ENCODE measurements at regions of chr4 and their contacts with region 1.

Region 1: DNA sequence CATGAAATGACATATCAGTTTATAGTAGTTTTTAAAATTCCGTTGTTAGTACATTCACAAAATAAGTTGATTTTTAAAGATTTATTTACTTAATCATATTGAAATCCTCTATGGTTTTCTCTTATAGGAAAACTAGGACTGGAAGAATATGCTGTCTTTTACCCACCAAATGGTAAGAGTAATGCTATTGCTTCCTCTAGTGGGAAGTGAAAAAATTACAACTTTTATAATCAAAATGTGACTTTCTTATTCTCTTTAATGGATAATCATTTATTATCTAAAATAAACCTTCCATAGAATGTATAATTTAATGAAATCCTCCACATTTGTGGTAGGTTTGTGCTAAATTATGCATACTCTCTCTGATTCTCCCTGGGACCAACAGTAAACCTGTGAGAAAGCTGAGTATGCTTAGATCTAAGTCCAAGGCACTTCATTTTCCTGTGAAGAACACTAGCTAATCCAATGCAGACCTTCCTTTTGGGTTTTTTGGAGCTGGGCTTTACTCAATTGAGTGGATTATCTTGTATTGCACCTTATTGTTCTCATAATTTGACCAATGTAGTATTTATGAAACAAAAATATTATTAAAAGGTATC is 136.2 kb downstream of the TBC1D19 start:
- DNase-seq: no peak
- ATAC-seq: no peak
- H3K4me3 ChIP-seq: no peak overlapping the region
- H3K4me3 Mint-ChIP-seq: no peak overlapping the region
- H3K27ac ChIP-seq: no peak overlapping the region
- H3K27ac Mint-ChIP-seq: no peak overlapping the region
- H3K4me1 ChIP-seq: peaks cover 0 to 6% of the 10 kb centered on the region in 2 donors
- H3K4me1 Mint-ChIP-seq: peaks cover 7% of the 10 kb centered on the region
- H3K27me3 ChIP-seq: no peaks in the 10 kb centered on the region
- H3K27me3 Mint-ChIP-seq: no peaks in the 10 kb centered on the region
- CTCF ChIP-seq: peak; percentile 59

Region 2: GRCh38 chr4:26459054-26459755 is 260.8 kb before region 1 on chr4:
- CTCF ChIA-PET with region 1: interaction called, 4 read pairs
- POLR2A ChIA-PET with region 1: no interaction called
- intact Hi-C with region 1: loop called (anchors 1 kb)
- DNase-seq: peak; percentile 61
- ATAC-seq: no peak
- H3K4me3 ChIP-seq: peak overlapping the region in 1 of 5 experiments; percentile 17
- H3K4me3 Mint-ChIP-seq: peak overlapping the region; percentile 53
- H3K27ac ChIP-seq: no peak overlapping the region
- H3K27ac Mint-ChIP-seq: no peak overlapping the region
- H3K4me1 ChIP-seq: peaks cover 3 to 4% of the 10 kb centered on the region in 2 donors
- H3K4me1 Mint-ChIP-seq: peaks cover 4% of the 10 kb centered on the region
- H3K27me3 ChIP-seq: no peaks in the 10 kb centered on the region
- H3K27me3 Mint-ChIP-seq: peaks cover 5% of the 10 kb centered on the region
- CTCF ChIP-seq: peak; percentile 68

Region 3: DNA sequence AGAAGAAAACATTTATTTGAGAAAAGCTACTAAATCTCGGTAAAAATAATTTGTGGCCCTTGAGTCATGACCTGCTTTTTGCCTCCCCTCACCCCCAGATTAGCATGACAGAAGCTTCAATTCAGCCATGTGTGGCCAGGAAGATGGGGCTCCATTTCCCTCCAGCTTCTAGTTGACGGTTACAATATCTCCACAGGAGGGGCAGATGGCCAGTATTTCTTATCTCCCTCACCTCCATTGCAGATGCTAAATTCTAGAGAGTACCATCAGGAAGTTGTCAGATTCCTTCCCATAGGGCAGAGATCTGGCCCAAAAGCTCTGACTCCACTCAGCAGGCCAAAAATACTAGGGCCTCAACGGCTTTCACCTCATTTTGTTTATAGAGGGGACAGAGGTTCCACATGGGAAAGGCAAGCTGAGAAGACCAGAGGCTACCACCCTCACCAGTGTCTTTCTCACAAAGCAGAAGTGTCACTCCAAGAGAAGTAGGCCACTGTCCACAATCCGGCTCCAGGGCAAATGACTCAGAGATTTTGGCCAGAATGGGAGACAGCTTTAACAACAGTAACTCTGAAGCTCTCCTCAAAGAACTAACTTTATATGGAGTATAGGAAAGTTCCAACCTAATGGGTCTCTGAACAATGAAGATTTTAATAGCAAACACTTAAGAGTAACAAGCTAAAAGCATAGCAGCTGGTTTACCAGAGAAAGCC is 27.9 kb before region 1 on chr4:
- CTCF ChIA-PET with region 1: no interaction called
- POLR2A ChIA-PET with region 1: no interaction called
- intact Hi-C with region 1: no loop called
- DNase-seq: no peak
- ATAC-seq: no peak
- H3K4me3 ChIP-seq: no peak overlapping the region
- H3K4me3 Mint-ChIP-seq: no peak overlapping the region
- H3K27ac ChIP-seq: no peak overlapping the region
- H3K27ac Mint-ChIP-seq: no peak overlapping the region
- H3K4me1 ChIP-seq: no peaks in the 10 kb centered on the region
- H3K4me1 Mint-ChIP-seq: no peaks in the 10 kb centered on the region
- H3K27me3 ChIP-seq: no peaks in the 10 kb centered on the region
- H3K27me3 Mint-ChIP-seq: no peaks in the 10 kb centered on the region
- CTCF ChIP-seq: no peak

Region 4: GRCh38 chr4:26731351-26732035 is 11.4 kb after region 1 on chr4:
- CTCF ChIA-PET with region 1: no interaction called
- POLR2A ChIA-PET with region 1: no interaction called
- intact Hi-C with region 1: no loop called
- DNase-seq: no peak
- ATAC-seq: no peak
- H3K4me3 ChIP-seq: no peak overlapping the region
- H3K4me3 Mint-ChIP-seq: no peak overlapping the region
- H3K27ac ChIP-seq: no peak overlapping the region
- H3K27ac Mint-ChIP-seq: no peak overlapping the region
- H3K4me1 ChIP-seq: no peaks in the 10 kb centered on the region
- H3K4me1 Mint-ChIP-seq: no peaks in the 10 kb centered on the region
- H3K27me3 ChIP-seq: no peaks in the 10 kb centered on the region
- H3K27me3 Mint-ChIP-seq: no peaks in the 10 kb centered on the region
- CTCF ChIP-seq: no peak

Measured in B cell (primary cell).